ENCODE measurements at regions of chr2 and their contacts with region 1.

Region 1: DNA sequence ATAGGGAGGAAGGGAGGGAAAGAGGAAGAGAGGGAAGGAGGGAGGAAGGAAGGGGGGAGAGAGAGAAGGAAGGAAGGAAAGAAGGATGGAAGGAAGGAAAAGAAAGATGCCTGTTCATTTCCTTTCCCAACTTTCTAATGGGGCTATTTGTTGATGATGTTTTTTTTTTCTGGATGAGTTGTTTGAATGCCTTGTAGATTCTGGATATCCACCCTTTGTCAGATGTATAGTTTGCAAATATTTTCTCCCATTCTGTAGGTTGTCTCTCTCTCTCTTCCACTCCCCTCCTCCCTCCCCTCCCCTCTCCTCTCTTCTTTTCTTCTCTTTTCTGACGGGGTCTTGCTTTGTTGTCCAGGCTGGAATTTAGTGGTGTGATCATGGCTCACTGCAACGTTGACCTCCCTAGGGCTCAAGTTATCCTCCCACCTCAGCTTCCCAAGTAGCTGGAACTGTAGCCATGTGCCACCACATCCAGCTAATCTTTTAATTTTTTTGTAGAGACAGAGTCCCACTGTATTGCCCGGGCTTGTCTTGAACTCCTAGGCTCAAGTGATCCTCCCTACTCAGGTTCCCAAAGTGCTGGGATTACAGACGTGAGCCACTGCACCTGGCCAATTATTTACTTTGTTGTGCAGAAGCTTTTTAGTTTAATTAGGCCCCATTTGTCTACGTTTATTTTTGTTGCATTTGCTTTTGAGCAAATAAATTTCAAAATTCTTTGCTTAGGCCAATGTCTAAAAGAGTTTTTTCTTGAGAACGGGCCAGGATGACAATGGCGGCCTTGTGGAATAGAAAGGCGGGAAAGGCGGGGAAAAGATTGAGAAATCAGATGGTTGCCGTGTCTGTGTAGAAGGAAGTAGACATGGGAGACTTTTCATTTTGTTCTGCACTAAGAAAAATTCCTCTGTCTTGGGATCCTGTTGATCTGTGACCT is 57.3 kb upstream of the FAM117B start:
- DNase-seq: no peak
- H3K4me3 Mint-ChIP-seq: no peak overlapping the region
- H3K27ac Mint-ChIP-seq: no peak overlapping the region
- H3K4me1 Mint-ChIP-seq: no peaks in the 10 kb centered on the region
- H3K27me3 Mint-ChIP-seq: no peaks in the 10 kb centered on the region

Region 2: DNA sequence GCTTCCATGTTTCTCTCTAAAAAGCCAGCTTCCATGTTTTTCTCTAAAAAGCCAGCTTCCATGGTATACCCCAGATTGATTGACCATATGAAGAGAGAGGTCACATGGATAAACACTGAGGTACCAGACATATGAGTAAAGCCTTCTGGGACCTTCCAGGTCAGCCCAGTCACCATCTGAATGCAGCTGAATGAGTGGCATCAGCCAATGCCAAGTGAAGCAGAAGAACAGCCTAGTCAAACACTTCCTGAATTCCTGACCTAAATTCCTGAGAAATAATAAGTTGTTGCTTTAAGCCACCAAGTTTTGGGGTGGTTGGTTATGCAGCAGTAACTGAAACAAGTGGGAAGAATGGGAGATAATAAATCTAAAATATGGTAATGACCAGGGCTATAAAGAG is 791.0 kb before region 1 on chr2:
- intact Hi-C with region 1: no loop called
- DNase-seq: no peak
- H3K4me3 Mint-ChIP-seq: no peak overlapping the region
- H3K27ac Mint-ChIP-seq: no peak overlapping the region
- H3K4me1 Mint-ChIP-seq: peaks cover 8% of the 10 kb centered on the region
- H3K27me3 Mint-ChIP-seq: peaks cover 22% of the 10 kb centered on the region

Region 3: DNA sequence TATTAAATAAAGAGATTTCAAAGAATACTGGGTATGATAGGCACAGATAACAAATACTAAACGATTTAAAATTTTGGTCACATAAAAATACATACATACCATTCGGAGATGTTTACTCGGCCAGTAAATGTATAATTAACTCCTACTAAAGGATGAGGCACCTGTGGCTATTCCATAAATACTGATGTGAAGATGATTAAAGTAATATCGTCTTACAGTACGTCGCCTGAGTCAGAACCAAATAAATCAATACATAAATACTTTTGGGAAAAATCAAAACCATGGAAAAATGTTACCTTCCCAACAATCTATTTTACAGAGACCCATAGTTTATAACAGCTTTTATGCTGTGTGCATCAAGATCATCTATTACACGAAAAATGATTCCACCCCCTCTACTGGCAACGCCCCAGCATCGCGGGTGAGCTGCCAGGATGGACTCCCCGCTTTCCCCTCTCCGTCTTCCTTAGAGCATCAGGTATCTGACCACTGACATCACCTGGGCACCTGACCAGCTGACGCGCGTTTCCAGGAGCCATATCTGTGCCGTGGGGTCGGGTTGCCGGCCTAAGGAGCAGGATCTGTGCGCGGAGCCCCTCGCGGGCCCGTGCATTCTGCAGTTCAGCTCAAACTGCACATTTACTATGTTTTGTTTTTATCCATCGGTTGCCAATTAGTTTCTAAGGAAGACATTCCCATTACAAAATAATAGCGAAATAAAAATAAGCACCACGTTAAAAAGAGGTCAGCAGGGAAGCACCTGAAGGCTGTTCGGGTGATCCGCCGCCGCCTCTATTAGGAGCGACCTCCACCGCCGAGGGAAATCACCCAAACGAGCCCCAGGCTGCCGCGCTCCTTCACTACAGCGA is 293.1 kb after region 1 on chr2:
- intact Hi-C with region 1: loop called (anchors 1 kb)
- DNase-seq: peak; percentile 58
- H3K4me3 Mint-ChIP-seq: peak overlapping the region; percentile 84
- H3K27ac Mint-ChIP-seq: peak overlapping the region; percentile 74
- H3K4me1 Mint-ChIP-seq: peaks cover 11% of the 10 kb centered on the region
- H3K27me3 Mint-ChIP-seq: no peaks in the 10 kb centered on the region

Region 4: DNA sequence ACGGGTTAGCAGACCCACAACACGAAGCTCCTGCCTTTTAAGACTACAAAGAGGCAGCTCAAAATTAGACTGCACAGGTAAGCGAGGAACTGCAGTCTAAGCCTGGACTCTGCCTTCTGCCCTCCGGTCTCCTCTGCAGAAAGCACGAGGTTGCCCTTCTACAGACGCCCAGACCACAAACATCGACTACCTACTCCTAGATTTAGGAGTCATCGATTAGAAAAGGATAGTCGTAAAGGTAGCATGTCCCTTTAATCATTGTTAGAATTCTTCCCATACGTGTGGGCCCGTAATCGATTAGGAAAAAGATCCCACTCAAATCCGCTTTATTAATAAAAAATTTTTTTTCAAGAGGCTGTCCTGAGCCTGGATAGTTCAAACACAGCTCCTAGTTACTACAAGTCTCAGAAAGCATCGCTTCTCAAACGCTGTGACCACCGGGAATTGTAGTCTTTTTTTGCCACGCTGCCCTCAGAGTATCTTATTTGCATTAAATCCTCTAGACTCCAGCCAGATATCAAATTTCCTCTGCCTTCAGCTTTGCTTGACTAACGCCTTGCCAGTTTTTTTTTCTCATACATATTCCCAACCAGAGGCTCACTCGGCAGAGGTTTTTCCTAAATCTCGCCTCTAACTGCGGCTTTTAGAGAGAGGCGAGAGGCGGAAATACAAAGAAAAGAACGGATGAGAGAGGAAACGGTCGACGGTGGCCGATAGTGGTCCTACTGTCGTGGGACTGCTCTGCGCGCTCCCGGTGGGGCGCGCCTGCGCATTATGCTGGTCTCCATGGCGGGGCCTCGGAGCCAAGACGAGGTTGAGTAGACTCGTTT is 334.2 kb after region 1 on chr2 and contains the starts of genes CARF and WDR12:
- intact Hi-C with region 1: no loop called
- DNase-seq: peak; percentile 89
- H3K4me3 Mint-ChIP-seq: peak within 1 kb of the TSS; percentile 95
- H3K27ac Mint-ChIP-seq: peak within 1 kb of the TSS; percentile 98
- H3K4me1 Mint-ChIP-seq: peaks cover 26% of the 10 kb centered on the region
- H3K27me3 Mint-ChIP-seq: no peaks in the 10 kb centered on the region
- total RNA-seq, gene CARF: 4.6 and 5.0 TPM in 2 replicates
- total RNA-seq, gene WDR12: 128 and 139 TPM in 2 replicates

Measured in activated T-helper 2 cell treated with anti-CD3 and anti-CD28 coated beads, Interferon-gamma antibody, Interleukin-2, Interleukin-4, amounts not matched to agents 10 μg/mL and 5 μg/mL and 100 μg/mL, durations not matched to agents 14 hours and 24 hours and 36 hours (primary cell).